MCF 10A (cell line): ENCODE measurements at regions of chr12 and their contacts with region 1.

Region 1: GRCh38 chr12:109518820-109519665 is 41.6 kb downstream of the UBE3B start:
- DNase-seq: peak; percentile 69
- H3K4me3 Mint-ChIP-seq: no peak overlapping the region
- H3K27ac Mint-ChIP-seq: no peak overlapping the region
- H3K4me1 Mint-ChIP-seq: no peaks in the 10 kb centered on the region
- H3K27me3 Mint-ChIP-seq: no peaks in the 10 kb centered on the region
- CTCF ChIP-seq: peak; percentile 78

Region 2: DNA sequence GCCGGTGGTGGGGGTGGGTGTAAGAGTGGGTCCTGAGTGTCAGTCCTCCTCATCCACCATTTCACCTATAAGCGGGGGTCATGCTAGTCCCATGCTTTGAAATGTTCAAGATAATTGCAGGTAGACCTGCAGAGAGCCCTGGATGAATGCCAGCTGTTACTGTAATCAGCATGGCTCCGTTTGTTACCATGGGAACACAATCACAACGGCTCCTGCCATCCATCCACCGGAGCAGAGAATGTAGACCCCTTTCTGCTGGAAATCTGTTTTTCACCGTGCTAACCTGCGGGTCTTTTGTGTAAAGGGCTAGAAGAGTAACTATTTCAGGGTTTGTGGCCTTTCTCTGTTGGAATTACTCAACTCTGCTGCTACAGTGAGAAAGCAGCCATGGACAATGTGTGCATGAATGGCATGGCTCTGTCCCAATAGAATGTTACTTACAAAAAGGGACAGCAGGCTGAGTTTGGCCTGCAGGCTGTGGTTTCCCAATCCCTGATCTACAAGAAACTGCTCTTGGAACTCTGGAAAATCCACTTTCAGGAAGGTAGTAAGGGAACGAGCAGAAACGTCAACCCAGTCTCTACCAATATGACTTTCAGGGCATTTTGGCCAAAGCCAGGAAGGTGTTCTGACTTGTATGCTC is 78.1 kb before region 1 on chr12:
- CTCF ChIA-PET with region 1: no interaction called
- POLR2A ChIA-PET with region 1: no interaction called
- intact Hi-C with region 1: no loop called
- DNase-seq: no peak
- H3K4me3 Mint-ChIP-seq: no peak overlapping the region
- H3K27ac Mint-ChIP-seq: no peak overlapping the region
- H3K4me1 Mint-ChIP-seq: peaks cover 5% of the 10 kb centered on the region
- H3K27me3 Mint-ChIP-seq: no peaks in the 10 kb centered on the region
- CTCF ChIP-seq: no peak

Region 3: DNA sequence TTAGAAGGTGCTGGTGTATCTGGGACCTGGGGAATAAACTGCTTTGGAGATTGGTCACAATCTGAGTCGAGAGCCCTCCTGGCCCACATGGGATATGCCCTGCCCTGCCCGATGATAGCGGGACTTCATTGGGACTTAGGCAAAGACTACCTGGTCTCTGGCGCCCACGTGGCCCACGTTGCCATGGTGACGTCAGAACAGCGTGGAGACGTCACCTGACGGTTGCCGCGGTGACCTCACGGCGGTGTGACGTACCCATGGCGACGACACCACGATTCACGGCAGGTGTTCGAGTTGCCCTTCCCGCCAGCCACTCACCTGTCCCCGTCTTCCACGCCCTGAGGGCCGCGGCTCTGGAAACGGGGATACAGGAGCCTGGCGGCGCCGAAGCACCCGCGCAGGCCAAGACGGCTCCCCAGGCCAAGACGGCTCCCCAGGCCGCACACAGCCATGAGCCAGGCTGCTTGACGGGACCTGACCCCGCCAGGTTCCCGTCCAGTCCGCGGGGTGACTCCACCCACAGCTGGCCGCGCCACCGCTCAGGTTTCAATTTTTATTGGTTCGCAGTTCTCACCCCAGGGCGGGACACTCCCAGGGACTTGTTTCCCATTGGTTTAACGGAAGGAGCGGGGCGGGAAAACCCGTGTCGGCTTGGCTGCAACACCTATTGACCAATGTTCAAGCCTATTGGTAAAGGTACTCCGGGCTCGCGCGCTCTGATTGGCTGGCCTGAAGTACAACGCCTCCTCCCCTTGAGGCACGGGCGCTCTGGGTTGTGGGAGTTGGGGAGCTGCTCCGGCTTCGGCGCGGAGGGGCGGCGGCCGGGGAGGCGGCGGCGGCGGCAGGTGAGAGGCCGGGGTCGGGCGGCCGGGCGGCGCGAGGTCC is 54.2 kb after region 1 on chr12 and contains the starts of genes MMAB and MVK:
- CTCF ChIA-PET with region 1: interaction called, 4 read pairs
- POLR2A ChIA-PET with region 1: interaction called, 3 read pairs
- intact Hi-C with region 1: loop called (anchors 2 kb)
- DNase-seq: peak; percentile 100
- H3K4me3 Mint-ChIP-seq: peak within 1 kb of the TSS; percentile 92
- H3K27ac Mint-ChIP-seq: peak within 1 kb of the TSS; percentile 97
- H3K4me1 Mint-ChIP-seq: peaks cover 16% of the 10 kb centered on the region
- H3K27me3 Mint-ChIP-seq: no peaks in the 10 kb centered on the region
- CTCF ChIP-seq: no peak
- total RNA-seq, gene MMAB: 36.0 and 59.2 TPM in 2 replicates
- total RNA-seq, gene MVK: 15.5 and 17.1 TPM in 2 replicates

Region 4: GRCh38 chr12:109612975-109613502 is 94.0 kb after region 1 on chr12:
- CTCF ChIA-PET with region 1: no interaction called
- POLR2A ChIA-PET with region 1: no interaction called
- intact Hi-C with region 1: loop called (anchors 1 kb)
- DNase-seq: peak; percentile 34
- H3K4me3 Mint-ChIP-seq: no peak overlapping the region
- H3K27ac Mint-ChIP-seq: no peak overlapping the region
- H3K4me1 Mint-ChIP-seq: no peaks in the 10 kb centered on the region
- H3K27me3 Mint-ChIP-seq: peaks cover 52% of the 10 kb centered on the region
- CTCF ChIP-seq: peak; percentile 25

Region 5: GRCh38 chr12:109637348-109637747 is 118.3 kb after region 1 on chr12:
- CTCF ChIA-PET with region 1: no interaction called
- POLR2A ChIA-PET with region 1: no interaction called
- intact Hi-C with region 1: no loop called
- DNase-seq: no peak
- H3K4me3 Mint-ChIP-seq: no peak overlapping the region
- H3K27ac Mint-ChIP-seq: no peak overlapping the region
- H3K4me1 Mint-ChIP-seq: no peaks in the 10 kb centered on the region
- H3K27me3 Mint-ChIP-seq: peaks cover 10% of the 10 kb centered on the region
- CTCF ChIP-seq: no peak

Region 6: GRCh38 chr12:109775172-109775881 is 256.3 kb after region 1 on chr12:
- CTCF ChIA-PET with region 1: interaction called, 27 read pairs
- POLR2A ChIA-PET with region 1: no interaction called
- intact Hi-C with region 1: loop called (anchors 1 kb)
- DNase-seq: peak; percentile 77
- H3K4me3 Mint-ChIP-seq: no peak overlapping the region
- H3K27ac Mint-ChIP-seq: no peak overlapping the region
- H3K4me1 Mint-ChIP-seq: peaks cover 12% of the 10 kb centered on the region
- H3K27me3 Mint-ChIP-seq: no peaks in the 10 kb centered on the region
- CTCF ChIP-seq: peak; percentile 95